Activated CD4-positive, alpha-beta memory T cell treated with anti-CD3 and anti-CD28 coated beads for 36 hours (primary cell): ENCODE measurements at regions of chr22 and their contacts with region 1.

Region 1: GRCh38 chr22:36856121-36856791 is 4.5 kb upstream of the NCF4 start:
- DNase-seq: peak; percentile 96
- H3K4me3 Mint-ChIP-seq: no peak overlapping the region
- H3K27ac Mint-ChIP-seq: no peak overlapping the region
- H3K4me1 Mint-ChIP-seq: peaks cover 28% of the 10 kb centered on the region
- H3K27me3 Mint-ChIP-seq: peaks cover 2% of the 10 kb centered on the region

Region 2: GRCh38 chr22:36757668-36758211 is 98.5 kb before region 1 on chr22:
- CTCF ChIA-PET with region 1: interaction called, 11 read pairs
- POLR2A ChIA-PET with region 1: no interaction called
- intact Hi-C with region 1: loop called (anchors 1 kb)
- DNase-seq: peak; percentile 85
- H3K4me3 Mint-ChIP-seq: no peak overlapping the region
- H3K27ac Mint-ChIP-seq: no peak overlapping the region
- H3K4me1 Mint-ChIP-seq: no peaks in the 10 kb centered on the region
- H3K27me3 Mint-ChIP-seq: peaks cover 8% of the 10 kb centered on the region

Region 3: GRCh38 chr22:36781656-36782627 is 74.3 kb before region 1 on chr22:
- CTCF ChIA-PET with region 1: interaction called, 76 read pairs
- POLR2A ChIA-PET with region 1: no interaction called
- intact Hi-C with region 1: loop called (anchors 1 kb)
- DNase-seq: peak; percentile 96
- H3K4me3 Mint-ChIP-seq: peak overlapping the region; percentile 49
- H3K27ac Mint-ChIP-seq: peak overlapping the region; percentile 76
- H3K4me1 Mint-ChIP-seq: peaks cover 32% of the 10 kb centered on the region
- H3K27me3 Mint-ChIP-seq: peaks cover 1% of the 10 kb centered on the region

Region 4: GRCh38 chr22:36873680-36874537 is 17.7 kb after region 1 on chr22:
- CTCF ChIA-PET with region 1: interaction called, 16 read pairs
- POLR2A ChIA-PET with region 1: interaction called, 11 read pairs
- intact Hi-C with region 1: loop called (anchors 1 kb)
- DNase-seq: peak; percentile 76
- H3K4me3 Mint-ChIP-seq: no peak overlapping the region
- H3K27ac Mint-ChIP-seq: peak overlapping the region; percentile 90
- H3K4me1 Mint-ChIP-seq: peaks cover 19% of the 10 kb centered on the region
- H3K27me3 Mint-ChIP-seq: no peaks in the 10 kb centered on the region

Region 5: DNA sequence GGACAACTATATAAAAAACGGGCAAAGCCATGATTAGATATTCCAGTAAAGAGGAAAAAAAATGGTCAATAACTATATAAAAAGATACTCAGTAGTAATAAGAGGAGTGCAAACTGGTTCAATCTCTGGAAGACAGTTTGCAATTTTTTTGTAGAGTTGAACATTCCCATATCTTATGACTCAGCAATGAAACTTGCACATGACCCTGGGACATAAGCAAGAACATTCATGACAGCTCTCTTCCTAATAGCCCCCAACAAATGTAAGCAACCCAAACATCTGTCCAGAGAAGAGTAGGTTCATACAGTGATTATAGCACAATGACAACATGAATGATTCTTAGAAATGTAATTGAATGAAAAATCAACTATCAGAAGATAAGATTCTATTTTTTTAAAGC is 35.4 kb after region 1 on chr22:
- CTCF ChIA-PET with region 1: interaction called, 72 read pairs
- POLR2A ChIA-PET with region 1: no interaction called
- intact Hi-C with region 1: no loop called
- DNase-seq: no peak
- H3K4me3 Mint-ChIP-seq: no peak overlapping the region
- H3K27ac Mint-ChIP-seq: no peak overlapping the region
- H3K4me1 Mint-ChIP-seq: peaks cover 4% of the 10 kb centered on the region
- H3K27me3 Mint-ChIP-seq: peaks cover 1% of the 10 kb centered on the region

Region 6: GRCh38 chr22:36977947-36978660 is 121.8 kb after region 1 on chr22:
- CTCF ChIA-PET with region 1: interaction called, 139 read pairs
- POLR2A ChIA-PET with region 1: interaction called, 4 read pairs
- intact Hi-C with region 1: loop called (anchors 1 kb)
- DNase-seq: peak; percentile 94
- H3K4me3 Mint-ChIP-seq: peak overlapping the region; percentile 78
- H3K27ac Mint-ChIP-seq: peak overlapping the region; percentile 2
- H3K4me1 Mint-ChIP-seq: peaks cover 5% of the 10 kb centered on the region
- H3K27me3 Mint-ChIP-seq: no peaks in the 10 kb centered on the region

Region 7: GRCh38 chr22:37121887-37122591 is 265.8 kb after region 1 on chr22:
- CTCF ChIA-PET with region 1: no interaction called
- POLR2A ChIA-PET with region 1: no interaction called
- intact Hi-C with region 1: no loop called
- DNase-seq: peak; percentile 97
- H3K4me3 Mint-ChIP-seq: peak overlapping the region; percentile 88
- H3K27ac Mint-ChIP-seq: peak overlapping the region; percentile 100
- H3K4me1 Mint-ChIP-seq: peaks cover 81% of the 10 kb centered on the region
- H3K27me3 Mint-ChIP-seq: no peaks in the 10 kb centered on the region